ENCODE measurements at regions of chr16 and their contacts with region 1.

Region 1: GRCh38 chr16:26787924-26788323 is 278.8 kb upstream of the C16orf82 start:
- DNase-seq: no peak
- ATAC-seq: no peak
- H3K4me3 ChIP-seq: no peak overlapping the region
- H3K27ac ChIP-seq: no peak overlapping the region
- H3K4me1 ChIP-seq: no peaks in the 10 kb centered on the region
- H3K27me3 ChIP-seq: no peaks in the 10 kb centered on the region

Region 2: GRCh38 chr16:26214581-26215174 is 573.2 kb before region 1 on chr16:
- intact Hi-C with region 1: loop called in 1 of 4 experiments (anchors 5 kb)
- DNase-seq: no peak
- ATAC-seq: no peak
- H3K4me3 ChIP-seq: no peak overlapping the region
- H3K27ac ChIP-seq: no peak overlapping the region
- H3K4me1 ChIP-seq: no peaks in the 10 kb centered on the region
- H3K27me3 ChIP-seq: no peaks in the 10 kb centered on the region

Region 3: GRCh38 chr16:26863931-26864330 is 76.0 kb after region 1 on chr16:
- intact Hi-C with region 1: loop called in 1 of 4 experiments (anchors 10 kb)
- DNase-seq: no peak
- ATAC-seq: no peak
- H3K4me3 ChIP-seq: no peak overlapping the region
- H3K27ac ChIP-seq: no peak overlapping the region
- H3K4me1 ChIP-seq: no peaks in the 10 kb centered on the region
- H3K27me3 ChIP-seq: no peaks in the 10 kb centered on the region